Right ventricle myocardium inferior (tissue), 1 donor: ENCODE measurements at regions of chr9 and their contacts with region 1.

Region 1: DNA sequence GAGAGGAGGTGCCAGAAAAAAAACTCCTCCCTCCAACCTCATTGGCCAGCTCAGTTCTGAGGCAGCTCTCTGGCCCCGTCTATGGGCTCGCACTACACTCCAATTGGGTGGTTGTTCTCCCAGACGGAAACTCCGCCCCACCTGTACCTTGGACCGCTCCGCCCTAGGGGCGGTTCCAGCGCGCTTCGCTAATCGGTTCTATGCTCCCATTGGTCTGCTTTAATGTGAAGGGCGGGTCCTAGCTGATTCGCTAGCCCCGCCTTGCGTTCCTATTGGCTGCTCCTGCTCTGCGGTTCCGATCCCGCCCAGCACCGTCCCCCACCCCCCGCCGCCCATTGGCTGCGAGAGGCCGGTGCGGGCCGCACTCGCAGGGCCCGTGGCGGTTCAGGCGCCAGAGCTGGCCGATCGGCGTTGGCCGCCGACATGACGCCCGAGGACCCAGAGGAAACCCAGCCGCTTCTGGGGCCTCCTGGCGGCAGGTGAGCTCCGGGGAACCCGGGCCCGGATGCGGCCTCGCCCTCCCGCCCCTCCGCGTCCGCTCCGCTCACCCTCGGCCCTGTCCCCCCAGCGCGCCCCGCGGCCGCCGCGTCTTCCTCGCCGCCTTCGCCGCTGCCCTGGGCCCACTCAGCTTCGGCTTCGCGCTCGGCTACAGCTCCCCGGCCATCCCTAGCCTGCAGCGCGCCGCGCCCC is at the start of gene SLC2A8:
- DNase-seq: peak; percentile 98
- ATAC-seq: peak; percentile 99
- total RNA-seq, gene SLC2A8: 15.0 TPM

Region 2: DNA sequence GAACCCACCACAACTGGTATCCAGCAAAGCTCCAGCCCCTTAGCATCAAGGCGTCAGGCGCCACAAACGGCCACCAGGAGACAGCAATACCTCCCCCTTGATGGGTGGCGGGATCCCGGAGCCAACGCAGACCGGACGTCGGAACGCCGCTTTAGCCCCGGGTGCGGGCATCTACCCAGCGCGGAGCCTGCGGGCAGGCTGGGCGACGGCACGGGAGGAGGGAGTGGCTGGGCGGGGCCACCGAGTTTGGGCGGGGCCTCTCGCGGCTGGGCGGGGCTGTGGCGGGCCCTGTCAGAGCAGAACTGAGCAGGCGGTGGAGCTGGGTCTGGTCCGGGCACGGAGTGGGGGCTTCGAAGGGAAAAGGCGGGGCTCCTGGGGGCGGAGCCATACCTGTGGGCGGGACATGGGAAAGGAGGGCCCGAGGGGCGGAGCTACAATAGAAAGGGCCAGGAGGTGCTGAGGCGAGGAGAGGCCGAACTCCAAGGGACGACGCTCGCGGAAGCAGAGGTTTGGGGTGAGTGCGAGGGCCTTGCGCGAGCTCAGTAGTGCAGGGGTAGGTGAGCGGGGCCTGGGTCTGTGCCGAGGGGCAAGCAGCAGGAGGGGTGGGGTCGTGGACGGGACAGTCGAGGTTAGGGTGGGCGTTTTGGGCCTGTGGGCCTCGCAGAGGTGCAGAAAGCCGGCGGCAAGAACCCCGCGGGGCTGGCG is 172.6 kb before region 1 on chr9:
- intact Hi-C with region 1: loop called (anchors 5 kb)
- DNase-seq: peak; percentile 95
- ATAC-seq: peak; percentile 87

Region 3: GRCh38 chr9:127318651-127319167 is 78.2 kb before region 1 on chr9:
- intact Hi-C with region 1: loop called (anchors 5 kb)
- DNase-seq: no peak
- ATAC-seq: peak; percentile 61

Region 4: GRCh38 chr9:127336738-127337251 is 60.2 kb before region 1 on chr9:
- intact Hi-C with region 1: loop called (anchors 2 kb)
- DNase-seq: no peak
- ATAC-seq: peak; percentile 68